Naive thymus-derived CD4-positive, alpha-beta T cell (primary cell): ENCODE measurements at regions of chr4 and their contacts with region 1.

Region 1: GRCh38 chr4:152094970-152095700 is 334.3 kb upstream of the GATB start:
- DNase-seq: no peak
- ATAC-seq: no peak
- H3K4me3 ChIP-seq: peak overlapping the region; percentile 8
- H3K4me3 Mint-ChIP-seq: peak overlapping the region in 8 of 10 donors; percentile 11 to 58 (median 38)
- H3K27ac ChIP-seq: no peak overlapping the region
- H3K27ac Mint-ChIP-seq: peak overlapping the region; percentile 21 to 99 (median 97)
- H3K4me1 ChIP-seq: peaks cover 51 to 88% of the 10 kb centered on the region in 2 donors
- H3K4me1 Mint-ChIP-seq: peaks cover 48 to 93% (median 89%) of the 10 kb centered on the region in 7 donors
- H3K27me3 ChIP-seq: no peaks in the 10 kb centered on the region
- H3K27me3 Mint-ChIP-seq: no peaks in the 10 kb centered on the region

Region 2: GRCh38 chr4:152079543-152080293 is 15.4 kb before region 1 on chr4:
- CTCF ChIA-PET with region 1: interaction called, 5 read pairs
- POLR2A ChIA-PET with region 1: interaction called, 22 read pairs
- intact Hi-C with region 1: loop called (anchors 1 kb)
- DNase-seq: peak in 7 of 9 donors; percentile 35 to 74 (median 66)
- ATAC-seq: peak; percentile 86
- H3K4me3 ChIP-seq: peak overlapping the region; percentile 2
- H3K4me3 Mint-ChIP-seq: peak overlapping the region; percentile 56 to 85 (median 72)
- H3K27ac ChIP-seq: peak overlapping the region; percentile 58
- H3K27ac Mint-ChIP-seq: peak overlapping the region; percentile 89 to 97 (median 94)
- H3K4me1 ChIP-seq: peaks cover 23 to 37% of the 10 kb centered on the region in 2 donors
- H3K4me1 Mint-ChIP-seq: peaks cover 40 to 98% (median 91%) of the 10 kb centered on the region in 7 donors
- H3K27me3 ChIP-seq: no peaks in the 10 kb centered on the region
- H3K27me3 Mint-ChIP-seq: no peaks in the 10 kb centered on the region

Region 3: GRCh38 chr4:152398060-152398459 is 302.9 kb after region 1 on chr4:
- CTCF ChIA-PET with region 1: no interaction called
- POLR2A ChIA-PET with region 1: no interaction called
- intact Hi-C with region 1: no loop called
- DNase-seq: peak in 1 of 9 donors; percentile 9
- ATAC-seq: no peak
- H3K4me3 ChIP-seq: no peak overlapping the region
- H3K4me3 Mint-ChIP-seq: no peak overlapping the region
- H3K27ac ChIP-seq: no peak overlapping the region
- H3K27ac Mint-ChIP-seq: no peak overlapping the region
- H3K4me1 ChIP-seq: peaks cover 7 to 11% of the 10 kb centered on the region in 2 donors
- H3K4me1 Mint-ChIP-seq: peaks cover 22 to 42% (median 37%) of the 10 kb centered on the region in 7 donors
- H3K27me3 ChIP-seq: no peaks in the 10 kb centered on the region
- H3K27me3 Mint-ChIP-seq: no peaks in the 10 kb centered on the region